Head of caudate nucleus (tissue), 42 donors: ENCODE measurements at regions of chr9 and their contacts with region 1.

Region 1: GRCh38 chr9:33919276-33919897 is 102.4 kb downstream of the UBE2R2 start:
- DNase-seq: peak in 1 of 42 donors; percentile 11

Region 2: DNA sequence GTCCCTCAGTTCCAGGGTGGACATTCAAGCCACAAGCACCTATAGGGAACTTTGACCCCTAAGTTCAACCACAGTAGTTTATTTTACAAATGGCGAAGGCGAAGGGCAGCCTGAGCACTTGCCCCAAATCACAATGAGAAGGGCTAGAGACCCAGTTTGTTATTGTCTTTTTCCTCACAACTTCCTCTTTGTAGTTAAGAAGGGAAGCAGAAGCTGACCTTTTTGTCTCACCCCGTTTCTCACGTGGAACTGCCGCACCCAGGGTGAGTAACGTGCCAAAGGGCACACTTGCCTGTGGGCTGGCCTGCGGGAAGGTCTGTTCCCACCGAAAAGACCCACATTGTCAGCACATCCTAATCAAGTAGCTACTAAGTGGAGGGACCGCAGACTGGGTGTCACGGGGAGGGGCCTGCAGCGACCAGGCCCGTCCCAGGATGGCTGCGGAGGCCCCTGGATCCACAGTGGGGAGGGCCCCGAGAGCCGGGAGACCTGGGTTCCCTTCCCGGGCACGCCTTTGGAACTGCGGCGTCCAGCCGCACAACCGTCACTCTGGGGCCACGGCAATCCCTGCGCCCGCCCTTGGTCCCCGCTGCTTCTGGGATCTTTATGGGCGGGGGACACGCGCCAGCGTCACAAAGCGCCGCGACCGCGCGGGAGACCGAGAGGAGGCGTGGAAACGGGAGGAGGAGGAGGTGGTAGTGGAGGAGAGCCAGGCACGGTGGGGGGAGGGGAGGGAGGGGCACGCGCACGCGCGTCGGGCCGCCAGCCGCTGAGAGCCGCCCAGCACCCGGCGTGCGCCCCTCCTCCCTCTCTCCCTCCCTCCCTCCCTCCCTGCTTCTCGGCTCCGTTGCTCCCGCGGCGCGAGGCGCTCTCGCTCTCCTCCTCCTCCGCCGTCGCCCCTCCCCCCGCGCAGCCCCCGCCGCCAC is 102.8 kb before region 1 on chr9 and contains the start of gene UBE2R2:
- intact Hi-C with region 1: loop called (anchors 10 kb)
- DNase-seq: peak; percentile 83 to 97 (median 94)